Body of pancreas (tissue), 4 donors: ENCODE measurements at regions of chr1 and their contacts with region 1.

Region 1: DNA sequence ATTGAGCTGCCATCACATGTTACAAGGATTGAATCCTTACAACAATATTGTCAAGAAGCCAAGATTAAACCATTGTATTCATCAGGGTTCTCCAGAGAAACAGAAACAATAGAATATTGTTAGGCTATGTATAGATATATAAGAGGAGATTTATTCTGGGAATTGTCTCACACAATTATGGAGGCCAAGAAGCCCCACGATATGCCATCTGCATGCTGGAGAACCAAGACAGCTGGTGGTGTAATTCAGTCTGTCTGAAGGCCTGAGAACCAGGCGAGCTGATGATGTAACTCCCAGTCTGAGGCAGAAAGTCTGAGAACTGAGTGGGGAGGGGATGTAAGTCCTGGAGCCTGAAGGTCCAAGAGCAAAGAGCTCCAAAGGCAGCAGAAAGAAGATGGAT is 14.5 kb upstream of the TTF2 start:
- DNase-seq: no peak
- ATAC-seq: no peak
- H3K4me3 ChIP-seq: no peak overlapping the region
- H3K27ac ChIP-seq: no peak overlapping the region
- H3K4me1 ChIP-seq: peaks cover 5% of the 10 kb centered on the region
- H3K27me3 ChIP-seq: no peaks in the 10 kb centered on the region
- CTCF ChIP-seq: no peak
- POLR2A ChIP-seq: no peak

Region 2: DNA sequence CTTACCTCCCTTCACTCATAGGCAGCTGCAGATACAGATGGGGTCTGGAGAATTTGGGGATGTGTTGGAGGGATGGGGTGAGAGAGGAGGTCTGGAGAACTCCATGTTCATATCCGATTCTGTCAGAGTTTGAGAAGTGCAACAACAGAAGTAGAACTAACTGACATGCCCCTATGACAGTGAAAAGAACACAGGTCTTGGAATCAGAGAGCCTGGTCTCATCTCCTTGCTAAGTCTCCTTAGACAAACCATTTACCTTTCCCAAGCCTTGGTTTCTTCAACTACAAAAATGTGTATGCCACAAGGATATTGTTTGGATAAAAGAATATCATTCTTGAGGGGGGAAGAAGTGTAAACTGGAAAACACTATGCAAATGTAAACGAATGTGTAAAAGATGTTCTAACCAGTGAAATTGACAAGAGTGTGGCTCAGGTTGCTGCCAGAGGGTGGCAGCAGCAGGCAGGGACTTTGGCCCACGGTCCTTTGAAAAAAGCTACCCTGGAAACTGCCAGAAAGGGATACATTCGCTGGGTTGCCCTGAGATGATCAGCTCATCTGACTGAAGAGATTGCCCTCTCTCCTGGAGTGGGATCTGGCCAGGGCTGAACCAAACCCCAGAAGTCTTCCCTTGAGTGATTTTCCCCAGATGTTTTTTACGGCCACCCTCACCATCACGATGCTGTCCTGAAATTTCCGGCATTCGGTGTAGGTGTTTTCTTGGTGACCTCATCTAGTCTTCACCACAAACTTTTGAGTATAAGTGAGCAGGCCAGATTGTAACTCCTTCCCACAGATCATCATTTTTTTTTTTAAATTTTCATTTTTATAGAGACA is 308.4 kb before region 1 on chr1:
- intact Hi-C with region 1: loop called (anchors 2 kb)
- DNase-seq: peak; percentile 65 to 68 (median 65)
- ATAC-seq: peak; percentile 84
- H3K4me3 ChIP-seq: no peak overlapping the region
- H3K27ac ChIP-seq: no peak overlapping the region
- H3K4me1 ChIP-seq: no peaks in the 10 kb centered on the region
- H3K27me3 ChIP-seq: no peaks in the 10 kb centered on the region
- CTCF ChIP-seq: peak; percentile 55 to 87 (median 83)
- POLR2A ChIP-seq: no peak

Region 3: DNA sequence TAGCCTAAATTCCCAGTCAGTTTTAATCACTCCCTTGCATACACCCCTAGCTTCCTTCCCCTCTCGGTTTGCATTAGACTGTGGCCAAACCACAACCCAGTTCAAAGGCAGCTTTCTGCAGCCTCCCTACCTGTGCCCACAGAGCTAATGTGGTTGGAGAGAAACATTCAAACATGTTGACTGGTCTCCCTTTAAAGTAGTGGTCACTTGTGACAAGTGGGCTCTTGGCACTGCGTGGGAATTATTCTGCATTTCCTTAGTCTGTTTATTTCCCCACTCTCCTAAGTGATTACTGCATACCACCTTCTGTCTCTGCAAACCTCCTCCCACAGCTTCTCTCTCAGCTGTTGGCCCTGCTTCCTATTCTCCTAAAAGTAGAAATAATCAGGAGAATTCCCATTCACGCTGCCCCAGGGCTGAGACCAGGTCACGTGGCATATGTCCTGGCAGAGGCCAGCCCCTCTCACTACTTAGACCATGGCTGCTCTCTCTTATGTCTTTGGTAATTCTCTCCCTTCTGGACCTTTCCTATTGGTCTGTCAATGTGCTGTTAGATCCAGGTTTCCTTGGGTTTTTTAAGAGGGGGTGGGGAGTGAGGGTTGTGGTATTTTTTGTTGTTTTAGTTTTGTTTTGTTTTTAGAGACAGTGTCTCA is 82.5 kb before region 1 on chr1:
- intact Hi-C with region 1: loop called (anchors 10 kb)
- DNase-seq: no peak
- ATAC-seq: no peak
- H3K4me3 ChIP-seq: no peak overlapping the region
- H3K27ac ChIP-seq: no peak overlapping the region
- H3K4me1 ChIP-seq: no peaks in the 10 kb centered on the region
- H3K27me3 ChIP-seq: no peaks in the 10 kb centered on the region
- CTCF ChIP-seq: no peak
- POLR2A ChIP-seq: no peak

Region 4: GRCh38 chr1:117368724-117369108 is 323.1 kb after region 1 on chr1:
- intact Hi-C with region 1: no loop called
- DNase-seq: peak in 2 of 4 donors; percentile 21 to 36
- ATAC-seq: no peak
- H3K4me3 ChIP-seq: peak overlapping the region; percentile 14 to 57
- H3K27ac ChIP-seq: peak overlapping the region in 3 of 4 donors; percentile 99
- H3K4me1 ChIP-seq: peaks cover 34% of the 10 kb centered on the region
- H3K27me3 ChIP-seq: no peaks in the 10 kb centered on the region
- CTCF ChIP-seq: no peak
- POLR2A ChIP-seq: peak in 2 of 3 donors; percentile 23 to 27